ENCODE measurements at regions of chr22 and their contacts with region 1.

Region 1: GRCh38 chr22:39240828-39241793 is 3.7 kb downstream of the PDGFB start:
- DNase-seq: peak in 2 of 4 donors; percentile 60 to 82
- ATAC-seq: peak; percentile 6
- H3K4me3 ChIP-seq: peak overlapping the region; percentile 19 to 54
- H3K27ac ChIP-seq: peak overlapping the region; percentile 13 to 49
- H3K4me1 ChIP-seq: peaks cover 21 to 95% of the 10 kb centered on the region in 2 donors
- H3K27me3 ChIP-seq: peaks cover 34 to 100% of the 10 kb centered on the region in 2 donors
- CTCF ChIP-seq: no peak

Region 2: DNA sequence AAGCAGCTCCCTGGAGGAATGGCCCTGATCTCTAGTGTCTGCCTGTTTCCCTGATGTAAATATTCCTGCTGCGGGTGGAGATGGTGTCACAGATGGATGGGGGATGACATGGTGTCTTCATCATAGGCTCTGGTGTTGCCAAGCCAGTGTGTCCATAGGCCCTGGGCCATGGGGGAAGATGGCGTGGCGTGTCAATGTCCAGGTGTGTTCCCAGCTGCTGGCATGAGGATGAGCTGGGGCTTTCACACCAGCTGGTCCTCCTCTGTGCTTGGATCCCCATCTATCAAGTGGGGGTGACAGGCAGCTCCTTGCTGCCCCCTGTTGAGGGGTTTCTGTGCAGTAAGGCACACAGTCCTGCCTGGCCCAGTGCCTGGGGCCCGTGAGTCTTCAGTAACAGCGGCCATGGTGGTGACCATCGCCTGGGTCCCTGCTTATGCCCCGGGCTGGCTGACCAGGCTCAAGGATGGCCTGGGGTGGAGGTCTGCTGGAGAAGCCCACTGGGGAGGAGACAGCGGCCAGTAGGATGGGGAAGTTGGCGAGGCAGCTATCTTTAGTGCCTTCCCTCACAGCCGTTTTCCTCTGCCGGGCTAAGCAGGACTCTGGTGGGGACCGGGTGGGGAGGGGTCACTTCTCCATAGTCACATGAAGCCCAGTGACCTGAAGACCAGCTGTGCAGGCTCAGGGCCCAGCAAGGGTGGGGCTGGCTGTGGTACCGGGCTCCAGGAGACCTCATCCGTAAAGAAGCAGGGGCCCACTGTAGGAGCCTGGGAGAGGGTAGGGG is 65.7 kb after region 1 on chr22:
- intact Hi-C with region 1: loop called in 1 of 2 experiments (anchors 10 kb)
- DNase-seq: no peak
- ATAC-seq: peak; percentile 38
- H3K4me3 ChIP-seq: no peak overlapping the region
- H3K27ac ChIP-seq: no peak overlapping the region
- H3K4me1 ChIP-seq: peaks cover 0 to 30% of the 10 kb centered on the region in 2 donors
- H3K27me3 ChIP-seq: no peaks in the 10 kb centered on the region
- CTCF ChIP-seq: peak; percentile 20 to 32

Measured in left lung (tissue), 14 donors.